ENCODE measurements at regions of chr17 and their contacts with region 1.

Region 1: GRCh38 chr17:4997302-4998026 is at the starts of genes INCA1 and KIF1C:
- DNase-seq: peak; percentile 84 to 95 (median 92)
- ATAC-seq: peak; percentile 99
- H3K4me3 ChIP-seq: peak within 1 kb of the TSS; percentile 75
- H3K4me3 Mint-ChIP-seq: peak within 1 kb of the TSS; percentile 80 to 95 (median 88)
- H3K27ac ChIP-seq: peak within 1 kb of the TSS; percentile 83
- H3K27ac Mint-ChIP-seq: peak within 1 kb of the TSS; percentile 76 to 95 (median 88)
- H3K4me1 ChIP-seq: peaks cover 8 to 11% of the 10 kb centered on the region in 2 donors
- H3K4me1 Mint-ChIP-seq: peaks cover 18 to 29% (median 26%) of the 10 kb centered on the region in 7 donors
- H3K27me3 ChIP-seq: no peaks in the 10 kb centered on the region
- H3K27me3 Mint-ChIP-seq: no peaks in the 10 kb centered on the region
- total RNA-seq, gene INCA1: 0.38 to 0.42 (median 0.41) TPM in 4 of 5 experiments, not detected in the other
- total RNA-seq, gene KIF1C: 11.5 to 46.5 (median 21.0) TPM

Region 2: GRCh38 chr17:4759776-4760236 is 237.7 kb before region 1 on chr17:
- CTCF ChIA-PET with region 1: no interaction called
- POLR2A ChIA-PET with region 1: no interaction called
- intact Hi-C with region 1: no loop called
- DNase-seq: no peak
- ATAC-seq: peak; percentile 67
- H3K4me3 ChIP-seq: no peak overlapping the region
- H3K4me3 Mint-ChIP-seq: no peak overlapping the region
- H3K27ac ChIP-seq: no peak overlapping the region
- H3K27ac Mint-ChIP-seq: no peak overlapping the region
- H3K4me1 ChIP-seq: no peaks in the 10 kb centered on the region
- H3K4me1 Mint-ChIP-seq: no peaks in the 10 kb centered on the region
- H3K27me3 ChIP-seq: no peaks in the 10 kb centered on the region
- H3K27me3 Mint-ChIP-seq: peaks cover 6 to 37% (median 7%) of the 10 kb centered on the region in 5 donors

Region 3: GRCh38 chr17:4948931-4949320 is 48.5 kb before region 1 on chr17:
- CTCF ChIA-PET with region 1: no interaction called
- POLR2A ChIA-PET with region 1: interaction called, 23 read pairs
- intact Hi-C with region 1: loop called (anchors 2 kb)
- DNase-seq: peak in 7 of 9 donors; percentile 69 to 84 (median 79)
- ATAC-seq: peak; percentile 58
- H3K4me3 ChIP-seq: peak overlapping the region; percentile 98
- H3K4me3 Mint-ChIP-seq: peak overlapping the region; percentile 92 to 100 (median 98)
- H3K27ac ChIP-seq: peak overlapping the region; percentile 89
- H3K27ac Mint-ChIP-seq: peak overlapping the region; percentile 83 to 100 (median 96)
- H3K4me1 ChIP-seq: peaks cover 27 to 35% of the 10 kb centered on the region in 2 donors
- H3K4me1 Mint-ChIP-seq: peaks cover 37 to 50% (median 43%) of the 10 kb centered on the region in 7 donors
- H3K27me3 ChIP-seq: no peaks in the 10 kb centered on the region
- H3K27me3 Mint-ChIP-seq: peaks cover 0 to 2% (median 0%) of the 10 kb centered on the region in 5 donors

Region 4: GRCh38 chr17:4986951-4987766 is 10.3 kb before region 1 on chr17 and contains the start of gene CAMTA2:
- CTCF ChIA-PET with region 1: interaction called, 5 read pairs
- POLR2A ChIA-PET with region 1: interaction called, 36 read pairs
- intact Hi-C with region 1: loop called (anchors 1 kb)
- DNase-seq: peak; percentile 70 to 87 (median 80)
- ATAC-seq: peak; percentile 93
- H3K4me3 ChIP-seq: peak within 1 kb of the TSS; percentile 91
- H3K4me3 Mint-ChIP-seq: peak within 1 kb of the TSS; percentile 86 to 94 (median 91)
- H3K27ac ChIP-seq: peak within 1 kb of the TSS; percentile 99
- H3K27ac Mint-ChIP-seq: peak within 1 kb of the TSS; percentile 87 to 95 (median 93)
- H3K4me1 ChIP-seq: peaks cover 10 to 23% of the 10 kb centered on the region in 2 donors
- H3K4me1 Mint-ChIP-seq: peaks cover 29 to 51% (median 46%) of the 10 kb centered on the region in 7 donors
- H3K27me3 ChIP-seq: no peaks in the 10 kb centered on the region
- H3K27me3 Mint-ChIP-seq: no peaks in the 10 kb centered on the region
- total RNA-seq, gene CAMTA2: 55.2 to 90.0 (median 64.1) TPM

Region 5: GRCh38 chr17:5031365-5032082 is 34.1 kb after region 1 on chr17:
- CTCF ChIA-PET with region 1: interaction called, 3 read pairs
- POLR2A ChIA-PET with region 1: interaction called, 9 read pairs
- intact Hi-C with region 1: loop called (anchors 1 kb)
- DNase-seq: peak; percentile 61 to 85 (median 78)
- ATAC-seq: peak; percentile 90
- H3K4me3 ChIP-seq: peak overlapping the region; percentile 56
- H3K4me3 Mint-ChIP-seq: peak overlapping the region; percentile 79 to 89 (median 86)
- H3K27ac ChIP-seq: peak overlapping the region; percentile 79
- H3K27ac Mint-ChIP-seq: peak overlapping the region; percentile 89 to 95 (median 92)
- H3K4me1 ChIP-seq: peaks cover 10 to 17% of the 10 kb centered on the region in 2 donors
- H3K4me1 Mint-ChIP-seq: peaks cover 5 to 29% (median 23%) of the 10 kb centered on the region in 7 donors
- H3K27me3 ChIP-seq: no peaks in the 10 kb centered on the region
- H3K27me3 Mint-ChIP-seq: peaks cover 0 to 4% (median 0%) of the 10 kb centered on the region in 5 donors

Region 6: GRCh38 chr17:5080591-5080990 is 83.1 kb after region 1 on chr17:
- CTCF ChIA-PET with region 1: no interaction called
- POLR2A ChIA-PET with region 1: no interaction called
- intact Hi-C with region 1: no loop called
- DNase-seq: no peak
- ATAC-seq: no peak
- H3K4me3 ChIP-seq: no peak overlapping the region
- H3K4me3 Mint-ChIP-seq: peak overlapping the region in 4 of 10 donors; percentile 2 to 70 (median 48)
- H3K27ac ChIP-seq: no peak overlapping the region
- H3K27ac Mint-ChIP-seq: peak overlapping the region in 2 of 9 donors; percentile 70 to 87
- H3K4me1 ChIP-seq: peaks cover 13 to 15% of the 10 kb centered on the region in 2 donors
- H3K4me1 Mint-ChIP-seq: peaks cover 12 to 46% (median 35%) of the 10 kb centered on the region in 7 donors
- H3K27me3 ChIP-seq: no peaks in the 10 kb centered on the region
- H3K27me3 Mint-ChIP-seq: no peaks in the 10 kb centered on the region